Esophagus muscularis mucosa (tissue), 4 donors: ENCODE measurements at regions of chr1 and their contacts with region 1.

Region 1: GRCh38 chr1:160437432-160438316 is 37.3 kb downstream of the VANGL2 start:
- DNase-seq: no peak
- H3K4me3 ChIP-seq: no peak overlapping the region
- H3K27ac ChIP-seq: no peak overlapping the region
- H3K4me1 ChIP-seq: no peaks in the 10 kb centered on the region
- H3K27me3 ChIP-seq: no peaks in the 10 kb centered on the region
- CTCF ChIP-seq: no peak
- EP300 ChIP-seq: no peak
- POLR2A ChIP-seq: no peak

Region 2: GRCh38 chr1:160550572-160551034 is 112.9 kb after region 1 on chr1:
- intact Hi-C with region 1: no loop called
- DNase-seq: no peak
- H3K4me3 ChIP-seq: no peak overlapping the region
- H3K27ac ChIP-seq: no peak overlapping the region
- H3K4me1 ChIP-seq: no peaks in the 10 kb centered on the region
- H3K27me3 ChIP-seq: no peaks in the 10 kb centered on the region
- CTCF ChIP-seq: no peak
- EP300 ChIP-seq: no peak
- POLR2A ChIP-seq: no peak

Region 3: DNA sequence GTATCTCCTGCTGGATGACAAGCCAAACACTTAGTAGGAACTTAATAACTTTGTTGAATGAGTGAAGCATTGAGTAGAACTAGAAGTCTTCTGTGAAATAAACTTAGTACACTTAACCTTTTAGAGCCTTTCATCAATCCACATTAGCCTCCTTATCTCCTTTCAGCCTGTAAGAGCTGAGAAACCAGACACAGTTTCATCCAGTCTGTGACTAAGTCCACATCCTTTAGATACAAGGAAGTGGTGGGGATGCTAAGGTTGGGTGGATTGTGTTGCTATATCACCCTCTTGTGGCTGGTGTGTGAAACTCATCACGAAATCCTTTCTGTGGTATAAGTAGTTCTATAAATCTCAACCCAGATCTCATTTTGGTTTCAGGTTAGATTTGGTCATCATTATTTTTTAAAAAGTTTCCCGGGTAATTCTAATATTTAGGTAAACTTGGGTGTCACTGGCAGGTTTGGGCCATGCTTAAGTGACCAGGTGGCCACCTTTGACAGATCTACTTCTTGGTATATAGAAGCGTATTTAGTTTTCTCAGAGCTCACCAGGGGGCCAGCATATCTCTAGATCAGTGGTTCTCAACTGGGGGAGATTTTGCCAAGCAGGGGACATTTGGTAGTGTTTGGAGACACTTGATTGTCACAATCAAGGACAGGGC is 169.5 kb after region 1 on chr1:
- intact Hi-C with region 1: loop called (anchors 10 kb)
- DNase-seq: no peak
- H3K4me3 ChIP-seq: no peak overlapping the region
- H3K27ac ChIP-seq: no peak overlapping the region
- H3K4me1 ChIP-seq: no peaks in the 10 kb centered on the region
- H3K27me3 ChIP-seq: peaks cover 0 to 19% (median 0%) of the 10 kb centered on the region in 4 donors
- CTCF ChIP-seq: peak; percentile 38 to 49 (median 47)
- EP300 ChIP-seq: no peak
- POLR2A ChIP-seq: no peak

Region 4: GRCh38 chr1:160618763-160619274 is 181.1 kb after region 1 on chr1:
- intact Hi-C with region 1: no loop called
- DNase-seq: peak; percentile 34
- H3K4me3 ChIP-seq: no peak overlapping the region
- H3K27ac ChIP-seq: no peak overlapping the region
- H3K4me1 ChIP-seq: no peaks in the 10 kb centered on the region
- H3K27me3 ChIP-seq: peaks cover 0 to 4% (median 0%) of the 10 kb centered on the region in 4 donors
- CTCF ChIP-seq: peak in 2 of 3 experiments; percentile 31 to 35
- EP300 ChIP-seq: no peak
- POLR2A ChIP-seq: no peak

Region 5: DNA sequence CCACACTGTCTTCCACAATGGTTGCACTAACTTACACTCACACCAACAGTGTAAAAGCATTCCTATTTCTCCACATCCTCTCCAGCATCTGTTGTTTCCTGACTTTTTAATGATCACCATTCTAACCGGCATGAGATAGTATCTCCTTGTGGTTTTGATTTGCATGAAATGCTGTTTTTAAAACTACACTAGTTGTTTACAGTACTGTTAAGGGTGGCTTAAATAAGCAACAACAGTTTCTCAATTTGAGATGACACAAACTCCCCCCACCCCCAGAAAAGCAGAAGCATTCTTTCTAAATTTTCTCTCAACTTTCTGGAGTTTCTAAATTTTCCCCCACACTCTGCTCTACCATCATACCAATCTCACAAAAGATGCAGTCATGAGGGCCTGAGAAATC is 294.3 kb after region 1 on chr1:
- intact Hi-C with region 1: no loop called
- DNase-seq: no peak
- H3K4me3 ChIP-seq: no peak overlapping the region
- H3K27ac ChIP-seq: no peak overlapping the region
- H3K4me1 ChIP-seq: no peaks in the 10 kb centered on the region
- H3K27me3 ChIP-seq: no peaks in the 10 kb centered on the region
- CTCF ChIP-seq: no peak
- EP300 ChIP-seq: no peak
- POLR2A ChIP-seq: no peak